Mammary epithelial cell (primary cell): ENCODE measurements at regions of chr11 and their contacts with region 1.

Region 1: GRCh38 chr11:105156231-105156630 is 16.7 kb upstream of the CARD18 start:
- DNase-seq: peak; percentile 40
- H3K4me3 ChIP-seq: no peak overlapping the region
- H3K27ac ChIP-seq: no peak overlapping the region
- H3K4me1 ChIP-seq: no peaks in the 10 kb centered on the region
- H3K27me3 ChIP-seq: no peaks in the 10 kb centered on the region
- CTCF ChIP-seq: no peak

Region 2: DNA sequence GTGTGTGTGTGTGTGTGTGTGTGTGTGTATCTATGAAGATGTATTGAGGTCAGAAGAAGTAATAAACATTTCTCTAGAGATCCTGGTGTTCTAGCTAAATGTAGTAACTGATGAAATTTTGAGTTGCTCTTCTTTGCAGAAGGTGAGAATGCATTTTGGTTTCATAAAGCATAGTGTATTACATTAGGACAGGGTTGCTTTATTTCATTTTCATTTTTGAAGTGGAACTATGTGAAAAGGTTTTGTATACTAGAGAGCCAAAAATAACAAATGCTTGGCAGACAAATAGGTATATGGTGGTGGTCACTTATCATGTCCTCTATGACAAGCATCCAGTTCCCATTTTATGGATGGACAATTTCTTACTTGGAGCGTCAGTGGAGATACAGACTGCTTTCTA is 357.0 kb before region 1 on chr11:
- CTCF ChIA-PET with region 1: no interaction called
- dilution Hi-C with region 1: no loop called
- in situ Hi-C with region 1: no loop called
- intact Hi-C with region 1: no loop called
- DNase-seq: no peak
- H3K4me3 ChIP-seq: no peak overlapping the region
- H3K27ac ChIP-seq: no peak overlapping the region
- H3K4me1 ChIP-seq: no peaks in the 10 kb centered on the region
- H3K27me3 ChIP-seq: no peaks in the 10 kb centered on the region
- CTCF ChIP-seq: no peak

Region 3: GRCh38 chr11:105202844-105203548 is 46.8 kb after region 1 on chr11:
- CTCF ChIA-PET with region 1: no interaction called
- dilution Hi-C with region 1: loop called (anchors 5 kb)
- in situ Hi-C with region 1: no loop called
- intact Hi-C with region 1: no loop called
- DNase-seq: no peak
- H3K4me3 ChIP-seq: no peak overlapping the region
- H3K27ac ChIP-seq: no peak overlapping the region
- H3K4me1 ChIP-seq: no peaks in the 10 kb centered on the region
- H3K27me3 ChIP-seq: no peaks in the 10 kb centered on the region
- CTCF ChIP-seq: no peak

Region 4: DNA sequence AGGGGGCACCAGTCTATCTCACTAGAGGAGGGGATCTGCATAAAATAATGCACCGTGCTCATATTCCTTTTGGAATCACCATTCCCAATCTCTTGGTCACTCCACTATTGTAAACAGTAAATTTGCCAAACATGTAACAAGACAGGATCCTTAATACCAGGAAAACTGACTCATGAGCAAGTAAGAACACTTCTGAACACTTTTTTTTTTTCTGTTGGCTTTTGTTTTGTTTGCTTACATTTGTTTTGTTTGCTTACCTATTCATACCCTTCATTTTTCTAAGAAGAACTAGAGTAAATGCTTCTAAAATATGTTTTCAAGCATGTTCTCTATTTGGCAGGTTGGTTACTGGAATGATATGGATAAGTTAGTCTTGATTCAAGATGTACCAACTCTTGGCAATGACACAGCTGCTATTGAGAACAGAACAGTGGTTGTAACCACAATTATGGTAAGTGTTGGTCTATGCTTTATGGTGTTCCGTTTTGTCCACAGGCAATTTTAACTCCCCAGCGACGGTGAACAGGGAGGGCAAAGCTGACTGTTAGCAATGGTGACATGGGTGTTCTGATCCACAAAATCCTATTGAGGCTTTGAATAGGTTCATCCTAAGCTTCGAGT is 754.0 kb after region 1 on chr11:
- CTCF ChIA-PET with region 1: no interaction called
- dilution Hi-C with region 1: no loop called
- in situ Hi-C with region 1: no loop called
- intact Hi-C with region 1: no loop called
- DNase-seq: peak; percentile 69
- H3K4me3 ChIP-seq: no peak overlapping the region
- H3K27ac ChIP-seq: no peak overlapping the region
- H3K4me1 ChIP-seq: peaks cover 10% of the 10 kb centered on the region
- H3K27me3 ChIP-seq: no peaks in the 10 kb centered on the region
- CTCF ChIP-seq: no peak